Endothelial cell of umbilical vein (primary cell): ENCODE measurements at regions of chrX and their contacts with region 1.

Region 1: GRCh38 chrX:46903458-46904242 is 8.6 kb upstream of the JADE3 start:
- DNase-seq: peak; percentile 83
- H3K4me3 ChIP-seq: peak overlapping the region in 1 of 3 experiments; percentile 35
- H3K27ac ChIP-seq: peak overlapping the region; percentile 44
- H3K4me1 ChIP-seq: peaks cover 15% of the 10 kb centered on the region
- H3K27me3 ChIP-seq: no peaks in the 10 kb centered on the region
- CTCF ChIP-seq: peak; percentile 50 to 71
- POLR2A ChIP-seq: no peak

Region 2: GRCh38 chrX:46561824-46562657 is 341.6 kb before region 1 on chrX:
- CTCF ChIA-PET with region 1: no interaction called
- POLR2A ChIA-PET with region 1: no interaction called
- dilution Hi-C with region 1: no loop called
- intact Hi-C with region 1: no loop called
- DNase-seq: no peak
- H3K4me3 ChIP-seq: no peak overlapping the region
- H3K27ac ChIP-seq: no peak overlapping the region
- H3K4me1 ChIP-seq: no peaks in the 10 kb centered on the region
- H3K27me3 ChIP-seq: no peaks in the 10 kb centered on the region
- CTCF ChIP-seq: no peak
- POLR2A ChIP-seq: no peak

Region 3: GRCh38 chrX:46836701-46837557 is 66.7 kb before region 1 on chrX and contains the start of gene RP2:
- CTCF ChIA-PET with region 1: interaction called, 8 read pairs
- POLR2A ChIA-PET with region 1: no interaction called
- dilution Hi-C with region 1: no loop called
- intact Hi-C with region 1: loop called (anchors 2 kb)
- DNase-seq: peak; percentile 96
- H3K4me3 ChIP-seq: peak within 1 kb of the TSS; percentile 70 to 96 (median 71)
- H3K27ac ChIP-seq: peak within 1 kb of the TSS; percentile 67
- H3K4me1 ChIP-seq: peaks cover 5% of the 10 kb centered on the region
- H3K27me3 ChIP-seq: peaks cover 0 to 3% of the 10 kb centered on the region in 2 experiments
- CTCF ChIP-seq: no peak
- POLR2A ChIP-seq: no peak
- total RNA-seq, gene RP2: 18.7 and 20.5 TPM in 2 replicates

Region 4: DNA sequence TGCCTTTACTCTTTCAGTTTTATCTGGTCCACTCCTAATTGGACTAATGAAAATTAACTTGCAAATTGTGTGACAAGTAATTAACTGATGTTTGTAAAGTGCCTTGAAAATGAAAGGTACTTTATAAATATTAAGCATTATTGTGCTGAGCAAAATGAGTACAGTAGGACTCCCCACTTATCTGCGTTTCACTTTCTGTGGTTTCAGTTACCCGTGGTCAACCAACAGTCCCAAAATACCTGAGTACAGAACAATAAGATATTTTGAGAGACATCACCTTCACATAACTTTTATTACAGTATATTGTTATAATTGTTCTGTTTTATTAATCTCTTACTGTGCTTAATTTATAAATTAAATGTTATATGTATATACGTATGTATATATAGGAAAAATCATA is 18.9 kb before region 1 on chrX:
- CTCF ChIA-PET with region 1: no interaction called
- POLR2A ChIA-PET with region 1: no interaction called
- dilution Hi-C with region 1: no loop called
- intact Hi-C with region 1: no loop called
- DNase-seq: no peak
- H3K4me3 ChIP-seq: no peak overlapping the region
- H3K27ac ChIP-seq: no peak overlapping the region
- H3K4me1 ChIP-seq: no peaks in the 10 kb centered on the region
- H3K27me3 ChIP-seq: no peaks in the 10 kb centered on the region
- CTCF ChIP-seq: no peak
- POLR2A ChIP-seq: no peak

Region 5: DNA sequence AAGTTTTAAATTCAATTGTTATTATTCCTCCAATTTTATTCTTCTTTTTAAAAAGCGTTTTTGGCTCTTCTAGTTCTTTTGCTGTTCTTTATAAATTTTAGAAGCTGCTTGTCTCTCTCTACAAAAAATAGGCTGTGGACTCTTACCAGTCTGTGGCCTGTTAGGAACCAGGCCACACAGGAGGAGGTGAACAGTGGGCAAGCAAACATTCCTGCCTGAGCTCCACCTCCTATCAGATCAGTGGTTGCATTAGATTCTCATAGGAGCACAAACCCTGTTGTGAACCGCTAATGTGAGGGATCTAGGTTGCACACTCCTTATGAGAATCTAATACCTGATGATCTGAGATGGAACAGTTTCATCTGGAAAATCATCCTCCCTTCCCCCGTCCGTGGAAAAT is 31.6 kb after region 1 on chrX:
- CTCF ChIA-PET with region 1: no interaction called
- POLR2A ChIA-PET with region 1: no interaction called
- dilution Hi-C with region 1: no loop called
- intact Hi-C with region 1: no loop called
- DNase-seq: no peak
- H3K4me3 ChIP-seq: no peak overlapping the region
- H3K27ac ChIP-seq: no peak overlapping the region
- H3K4me1 ChIP-seq: no peaks in the 10 kb centered on the region
- H3K27me3 ChIP-seq: no peaks in the 10 kb centered on the region
- CTCF ChIP-seq: no peak
- POLR2A ChIP-seq: no peak

Region 6: DNA sequence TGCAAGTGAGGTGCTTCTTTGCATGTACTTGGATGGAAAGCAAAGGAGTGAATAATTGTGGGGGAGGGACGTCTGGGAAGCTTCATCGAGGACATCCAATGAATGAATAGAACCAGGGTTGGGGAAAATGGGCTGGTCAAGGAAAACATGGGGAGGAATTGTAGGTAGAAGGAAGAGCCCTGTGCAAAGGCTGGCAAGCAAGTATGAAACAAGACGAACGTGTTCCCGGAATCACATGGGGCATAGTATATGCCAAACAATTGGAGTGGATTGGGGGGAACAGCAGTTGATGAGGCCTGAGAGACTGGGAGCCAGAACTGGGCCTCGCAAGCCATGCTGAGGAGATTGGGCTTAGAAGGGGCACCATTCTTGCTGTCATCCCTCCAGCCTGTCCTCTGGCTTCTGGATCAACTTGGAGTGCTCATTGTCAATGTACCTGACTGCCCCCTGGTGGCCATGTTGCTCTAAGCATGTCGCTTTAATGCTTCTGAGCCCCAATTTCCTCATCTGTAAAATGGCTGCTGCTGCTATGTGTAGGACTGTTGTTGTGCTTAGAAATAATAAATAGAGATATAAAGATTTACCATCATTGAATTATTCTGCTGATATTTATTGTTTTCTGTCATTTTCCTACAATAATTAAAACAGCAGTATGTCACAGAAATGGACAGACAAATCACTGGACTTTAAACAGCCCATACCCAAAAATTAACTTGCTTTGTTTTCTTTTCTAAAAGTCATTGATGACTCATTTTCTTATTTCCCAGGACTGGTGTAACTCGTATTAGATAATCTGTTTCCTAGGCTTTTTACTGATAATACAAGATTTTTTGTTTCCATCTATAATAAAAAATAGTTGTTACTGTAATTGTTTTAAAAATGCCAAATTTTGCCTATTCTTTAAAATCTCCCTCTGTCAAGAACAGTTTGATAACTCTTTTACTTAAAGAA is 75.0 kb after region 1 on chrX:
- CTCF ChIA-PET with region 1: interaction called, 14 read pairs
- POLR2A ChIA-PET with region 1: no interaction called
- dilution Hi-C with region 1: no loop called
- intact Hi-C with region 1: loop called (anchors 1 kb)
- DNase-seq: peak; percentile 87
- H3K4me3 ChIP-seq: peak overlapping the region in 1 of 3 experiments; percentile 69
- H3K27ac ChIP-seq: peak overlapping the region; percentile 97
- H3K4me1 ChIP-seq: peaks cover 2% of the 10 kb centered on the region
- H3K27me3 ChIP-seq: no peaks in the 10 kb centered on the region
- CTCF ChIP-seq: peak; percentile 65 to 66
- POLR2A ChIP-seq: no peak

Region 7: DNA sequence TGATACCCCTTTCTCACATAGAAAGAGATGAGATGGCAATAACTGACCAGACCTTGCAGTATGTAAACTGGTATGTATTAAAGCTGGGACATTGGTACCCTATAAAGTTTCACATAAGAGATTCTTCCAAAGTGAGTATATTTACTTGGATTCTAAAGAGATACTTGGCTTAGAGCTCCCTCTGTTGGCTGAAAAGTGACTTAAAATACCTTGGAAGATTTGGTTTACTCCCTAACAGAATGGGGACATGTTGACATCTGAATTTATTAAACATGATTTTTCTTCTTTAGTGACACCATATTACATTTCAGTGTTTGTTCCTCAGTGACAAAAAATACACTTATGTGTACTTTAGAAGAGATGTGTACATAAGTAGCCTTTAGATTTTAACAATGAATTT is 126.7 kb after region 1 on chrX:
- CTCF ChIA-PET with region 1: interaction called, 21 read pairs
- POLR2A ChIA-PET with region 1: no interaction called
- dilution Hi-C with region 1: no loop called
- intact Hi-C with region 1: loop called (anchors 1 kb)
- DNase-seq: peak; percentile 69
- H3K4me3 ChIP-seq: no peak overlapping the region
- H3K27ac ChIP-seq: no peak overlapping the region
- H3K4me1 ChIP-seq: no peaks in the 10 kb centered on the region
- H3K27me3 ChIP-seq: no peaks in the 10 kb centered on the region
- CTCF ChIP-seq: peak; percentile 19 to 26
- POLR2A ChIP-seq: no peak

Region 8: GRCh38 chrX:47059142-47059874 is 155.7 kb after region 1 on chrX:
- CTCF ChIA-PET with region 1: no interaction called
- POLR2A ChIA-PET with region 1: no interaction called
- dilution Hi-C with region 1: no loop called
- intact Hi-C with region 1: no loop called
- DNase-seq: no peak
- H3K4me3 ChIP-seq: no peak overlapping the region
- H3K27ac ChIP-seq: no peak overlapping the region
- H3K4me1 ChIP-seq: no peaks in the 10 kb centered on the region
- H3K27me3 ChIP-seq: no peaks in the 10 kb centered on the region
- CTCF ChIP-seq: no peak
- POLR2A ChIP-seq: no peak